Prostate gland (tissue), 2 donors: ENCODE measurements at regions of chr3 and their contacts with region 1.

Region 1: DNA sequence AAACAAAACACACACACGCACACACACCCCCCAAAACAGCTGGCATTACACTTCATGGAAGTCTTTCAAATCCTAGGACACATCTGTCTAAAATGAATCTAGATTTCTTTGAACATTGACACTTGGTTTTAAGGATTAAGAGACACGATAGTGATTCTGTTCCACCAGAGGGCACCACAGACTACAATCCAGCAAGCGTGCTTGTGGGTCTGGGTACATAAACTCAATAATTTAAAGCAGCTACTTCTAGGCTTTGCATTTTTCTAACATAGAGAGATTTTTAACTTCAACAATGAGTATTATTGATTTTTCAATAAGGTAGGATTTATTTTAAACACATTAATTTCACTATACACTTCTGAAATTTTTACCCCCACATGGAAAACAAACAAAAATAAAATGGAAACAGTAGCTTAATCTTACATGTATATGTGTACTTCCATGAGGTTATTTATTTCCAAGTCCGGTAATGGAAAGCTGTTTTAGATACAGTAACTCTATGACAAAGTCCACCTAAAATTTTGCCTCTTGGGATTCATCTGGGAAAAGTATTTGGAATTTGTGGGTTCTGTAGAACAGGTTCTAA is 564.0 kb upstream of the TGFBR2 start:
- DNase-seq: peak; percentile 49
- H3K4me3 ChIP-seq: no peak overlapping the region
- H3K27ac ChIP-seq: no peak overlapping the region
- H3K4me1 ChIP-seq: no peaks in the 10 kb centered on the region
- H3K27me3 ChIP-seq: no peaks in the 10 kb centered on the region
- CTCF ChIP-seq: peak; percentile 37 to 71 (median 62)
- POLR2A ChIP-seq: no peak

Region 2: DNA sequence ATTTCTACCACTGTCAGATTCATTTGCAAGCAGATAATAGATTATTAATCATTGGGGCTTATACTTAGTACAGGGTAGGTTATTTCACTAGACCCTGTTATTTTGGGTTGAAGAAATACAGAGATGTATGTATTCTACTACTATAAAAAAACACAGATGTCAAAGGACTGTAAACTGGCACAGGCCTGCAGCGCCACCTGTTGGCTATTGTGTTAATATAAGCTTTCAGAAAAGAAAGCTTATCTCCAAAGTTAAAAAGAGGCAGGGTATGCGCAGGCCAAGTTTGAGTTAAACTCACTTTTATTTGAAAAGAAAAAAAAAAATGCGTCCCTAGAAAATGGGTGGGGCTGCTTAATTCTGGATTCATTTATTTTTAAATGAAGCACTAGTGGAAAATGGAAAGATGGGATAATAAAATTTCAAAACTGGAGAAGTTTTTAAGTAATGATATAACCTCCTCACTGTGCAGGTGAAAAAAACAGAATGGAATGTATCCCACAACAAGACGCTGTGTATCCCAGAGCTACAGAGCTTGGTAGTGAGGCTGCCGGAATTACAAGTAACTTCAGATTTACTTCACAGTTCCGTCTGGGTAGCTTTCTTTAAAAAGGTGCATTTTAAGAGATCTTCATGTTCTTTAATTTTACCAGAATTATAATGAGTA is 156.9 kb after region 1 on chr3:
- intact Hi-C with region 1: loop called (anchors 10 kb)
- DNase-seq: peak; percentile 54
- H3K4me3 ChIP-seq: no peak overlapping the region
- H3K27ac ChIP-seq: no peak overlapping the region
- H3K4me1 ChIP-seq: no peaks in the 10 kb centered on the region
- H3K27me3 ChIP-seq: no peaks in the 10 kb centered on the region
- CTCF ChIP-seq: peak; percentile 69 to 82 (median 76)
- POLR2A ChIP-seq: no peak

Region 3: GRCh38 chr3:30747771-30748281 is 705.5 kb after region 1 on chr3:
- intact Hi-C with region 1: loop called (anchors 5 kb)
- DNase-seq: no peak
- H3K4me3 ChIP-seq: no peak overlapping the region
- H3K27ac ChIP-seq: no peak overlapping the region
- H3K4me1 ChIP-seq: no peaks in the 10 kb centered on the region
- H3K27me3 ChIP-seq: no peaks in the 10 kb centered on the region
- CTCF ChIP-seq: peak in 2 of 4 experiments; percentile 9 to 33
- POLR2A ChIP-seq: no peak